Mammary epithelial cell (primary cell): ENCODE measurements at regions of chr5 and their contacts with region 1.

Region 1: DNA sequence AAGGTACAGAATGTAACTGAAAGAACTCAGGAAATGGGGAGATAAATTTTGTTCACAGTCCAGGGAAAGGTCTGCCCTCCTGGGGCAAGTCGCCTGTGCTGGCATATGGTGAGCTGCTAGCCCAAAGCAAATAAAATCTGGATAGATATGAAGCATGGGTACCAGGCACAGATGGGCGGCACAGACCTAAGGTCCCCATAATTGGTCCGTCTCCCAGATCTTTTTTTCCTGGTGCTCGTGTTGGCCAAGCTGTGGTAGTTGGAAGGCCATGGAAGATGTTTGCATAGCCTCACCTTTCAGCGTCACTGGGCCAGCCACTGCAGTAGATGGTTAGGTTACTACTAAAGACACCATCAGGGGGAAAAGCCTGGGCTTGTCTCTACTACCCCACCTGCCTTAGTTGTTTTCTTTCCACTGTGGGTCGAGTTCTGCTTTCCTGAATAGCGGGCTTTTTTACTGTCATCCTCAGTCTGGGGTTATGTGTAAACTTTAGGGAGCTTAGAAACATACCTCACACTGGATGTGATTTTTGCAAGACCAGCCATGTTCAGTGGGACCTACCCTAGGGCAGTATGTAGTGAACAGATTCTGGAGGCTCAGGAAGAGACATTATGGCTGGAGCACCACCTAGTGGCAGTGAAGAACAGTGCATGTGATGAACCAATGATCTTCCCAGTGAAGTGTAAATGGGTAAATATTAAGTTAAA is 24.2 kb upstream of the GLRX start:
- DNase-seq: peak; percentile 67
- H3K4me3 ChIP-seq: no peak overlapping the region
- H3K27ac ChIP-seq: no peak overlapping the region
- H3K4me1 ChIP-seq: peaks cover 7% of the 10 kb centered on the region
- H3K27me3 ChIP-seq: no peaks in the 10 kb centered on the region
- CTCF ChIP-seq: peak; percentile 96 to 97

Region 2: DNA sequence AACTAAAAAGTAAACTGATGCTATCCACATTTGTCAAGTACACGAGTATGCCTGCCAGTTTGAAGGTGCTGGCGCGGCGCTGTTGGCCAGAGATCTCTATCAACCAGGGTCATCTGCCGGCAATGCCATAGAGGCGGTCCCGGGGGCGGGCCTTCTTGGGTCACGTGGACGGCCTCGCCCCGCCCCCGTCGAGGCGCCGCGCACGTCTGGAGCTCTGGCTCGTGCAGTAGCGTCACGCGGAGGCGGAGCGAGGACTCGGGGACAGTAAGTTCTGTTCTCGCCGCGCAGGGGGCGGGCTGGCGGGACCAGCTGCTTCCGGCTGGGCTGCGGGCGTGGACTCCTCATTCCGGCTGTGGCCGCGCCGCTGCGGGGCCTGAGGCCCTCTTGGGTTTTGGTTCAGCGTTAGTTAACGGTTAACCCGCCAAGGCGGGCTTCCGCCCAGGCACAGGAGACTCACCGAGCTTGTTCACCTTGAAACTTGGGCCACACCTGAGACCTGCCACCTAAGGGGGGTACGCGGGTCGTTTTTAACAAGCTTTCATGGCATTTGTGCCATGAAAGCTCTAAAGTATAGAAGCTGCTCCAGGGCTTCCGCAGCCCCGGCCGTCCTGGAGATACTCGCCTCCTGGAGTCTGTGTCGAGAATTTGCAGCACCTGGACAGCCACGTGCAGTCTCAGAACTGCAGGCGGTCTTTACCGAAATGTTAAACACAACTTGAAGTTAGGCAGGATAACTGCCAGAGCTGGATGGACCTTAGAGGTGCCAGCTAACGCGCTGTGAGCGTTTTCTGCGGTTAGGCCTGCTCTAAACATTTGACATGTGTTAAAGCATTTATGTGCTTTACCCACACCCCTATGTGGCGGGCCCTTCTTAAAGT is 199.9 kb before region 1 on chr5 and contains the start of gene RFESD:
- CTCF ChIA-PET with region 1: no interaction called
- dilution Hi-C with region 1: loop called (anchors 25 kb)
- in situ Hi-C with region 1: no loop called
- intact Hi-C with region 1: loop called (anchors 1 kb)
- DNase-seq: peak; percentile 91
- H3K4me3 ChIP-seq: peak within 1 kb of the TSS; percentile 37 to 59 (median 51)
- H3K27ac ChIP-seq: peak within 1 kb of the TSS; percentile 84
- H3K4me1 ChIP-seq: no peaks in the 10 kb centered on the region
- H3K27me3 ChIP-seq: no peaks in the 10 kb centered on the region
- CTCF ChIP-seq: peak in 1 of 2 donors; percentile 29
- total RNA-seq, gene RFESD: 2.1 to 3.0 TPM

Region 3: GRCh38 chr5:95664204-95664786 is 182.4 kb before region 1 on chr5:
- CTCF ChIA-PET with region 1: no interaction called
- dilution Hi-C with region 1: loop called (anchors 25 kb)
- in situ Hi-C with region 1: loop called (anchors 5 kb)
- intact Hi-C with region 1: loop called (anchors 1 kb)
- DNase-seq: peak; percentile 18
- H3K4me3 ChIP-seq: no peak overlapping the region
- H3K27ac ChIP-seq: no peak overlapping the region
- H3K4me1 ChIP-seq: peaks cover 4% of the 10 kb centered on the region
- H3K27me3 ChIP-seq: no peaks in the 10 kb centered on the region
- CTCF ChIP-seq: peak; percentile 79 to 89